Activated naive CD8-positive, alpha-beta T cell treated with anti-CD3 and anti-CD28 coated beads, Interleukin-2, amount 10 ng/mL, durations not matched to agents 7 days and 5 days (primary cell): ENCODE measurements at regions of chr2 and their contacts with region 1.

Region 1: DNA sequence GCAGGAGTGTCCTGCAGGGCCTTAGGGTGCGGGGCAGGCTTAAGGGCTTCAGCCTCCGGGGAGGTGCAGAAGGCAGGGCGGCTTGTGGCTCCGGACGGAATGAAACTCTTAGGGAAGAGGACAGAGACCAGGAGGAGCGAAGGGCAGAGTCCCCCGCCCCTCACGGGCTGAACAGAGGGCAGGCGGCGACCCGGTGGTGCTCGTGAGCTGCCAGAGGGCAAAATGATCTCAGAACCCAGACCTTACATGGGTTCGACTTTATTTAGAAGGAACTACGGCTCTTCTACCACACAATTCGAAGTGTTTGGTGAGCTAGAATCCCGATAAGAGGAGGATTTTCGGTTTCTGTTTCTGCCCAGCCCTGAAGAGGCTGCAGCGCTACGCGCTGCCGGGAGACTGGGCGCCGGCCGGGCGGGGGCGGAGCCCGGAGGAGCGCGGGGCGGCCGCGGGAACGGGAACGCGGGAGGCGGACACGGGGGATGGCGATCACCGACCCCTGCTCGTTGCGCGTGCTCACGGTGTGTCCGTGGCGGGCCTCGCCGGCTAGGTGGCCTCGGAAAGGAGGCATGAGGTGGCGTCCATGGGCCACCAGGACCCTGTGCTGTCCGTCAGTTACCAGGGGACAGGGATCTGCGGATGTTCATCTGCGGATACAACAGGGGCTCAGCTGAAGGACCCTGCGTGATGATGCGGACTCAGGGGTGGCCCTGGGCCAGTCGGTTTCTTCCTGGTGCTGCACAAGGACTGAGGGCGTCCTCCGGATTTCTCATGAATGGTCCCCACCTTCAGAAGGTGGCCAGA is 4.2 kb upstream of the SP100 start:
- DNase-seq: peak; percentile 82
- ATAC-seq: peak; percentile 69
- H3K4me3 Mint-ChIP-seq: peak overlapping the region; percentile 98
- H3K27ac Mint-ChIP-seq: peak overlapping the region; percentile 100
- H3K4me1 Mint-ChIP-seq: peaks cover 62% of the 10 kb centered on the region
- H3K27me3 Mint-ChIP-seq: no peaks in the 10 kb centered on the region

Region 2: DNA sequence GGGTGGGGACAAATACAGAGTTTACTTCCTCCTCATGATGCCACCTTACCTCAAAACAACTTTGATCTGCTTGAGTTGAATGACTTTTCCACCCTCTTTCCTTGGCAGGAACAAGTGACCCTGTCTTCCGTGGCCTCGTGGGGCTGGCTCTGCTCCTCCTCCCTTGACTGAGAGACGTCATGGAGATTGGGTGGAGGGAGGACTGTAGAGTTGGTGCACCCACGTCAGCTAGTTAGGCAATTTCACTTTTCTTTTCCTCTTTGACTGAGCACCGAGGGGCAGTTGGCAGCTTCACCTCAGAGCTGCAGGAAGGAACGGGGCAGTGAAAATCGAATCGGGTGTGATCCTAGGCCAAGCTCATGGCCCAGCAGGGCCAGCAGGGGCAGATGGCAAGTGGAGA is 186.3 kb before region 1 on chr2 and contains the start of gene SP140:
- POLR2A ChIA-PET with region 1: interaction called, 13 read pairs
- DNase-seq: peak; percentile 58
- ATAC-seq: peak; percentile 84
- H3K4me3 Mint-ChIP-seq: peak within 1 kb of the TSS; percentile 89
- H3K27ac Mint-ChIP-seq: peak within 1 kb of the TSS; percentile 94
- H3K4me1 Mint-ChIP-seq: peaks cover 52% of the 10 kb centered on the region
- H3K27me3 Mint-ChIP-seq: no peaks in the 10 kb centered on the region
- total RNA-seq, gene SP140: 58.7 to 61.4 TPM